Ovary (tissue), 10 donors: ENCODE measurements at regions of chr14 and their contacts with region 1.

Region 1: GRCh38 chr14:99729991-99730868 is 46.1 kb downstream of the CYP46A1 start:
- DNase-seq: peak; percentile 49 to 82 (median 77)
- H3K4me3 ChIP-seq: peak overlapping the region; percentile 49
- H3K27ac ChIP-seq: no peak overlapping the region
- H3K4me1 ChIP-seq: peaks cover 9% of the 10 kb centered on the region
- H3K27me3 ChIP-seq: no peaks in the 10 kb centered on the region
- CTCF ChIP-seq: peak; percentile 80 to 87 (median 82)
- EP300 ChIP-seq: no peak
- POLR2A ChIP-seq: no peak

Region 2: GRCh38 chr14:99793213-99794150 is 63.3 kb after region 1 on chr14 and contains the start of gene EML1:
- intact Hi-C with region 1: loop called in 1 of 4 experiments (anchors 5 kb)
- DNase-seq: peak; percentile 84 to 90 (median 87)
- H3K4me3 ChIP-seq: peak within 1 kb of the TSS; percentile 68
- H3K27ac ChIP-seq: peak within 1 kb of the TSS; percentile 80 to 89
- H3K4me1 ChIP-seq: peaks cover 4% of the 10 kb centered on the region
- H3K27me3 ChIP-seq: no peaks in the 10 kb centered on the region
- CTCF ChIP-seq: no peak
- EP300 ChIP-seq: no peak
- POLR2A ChIP-seq: no peak
- total RNA-seq, gene EML1: 4.4 to 22.3 (median 9.8) TPM

Region 3: DNA sequence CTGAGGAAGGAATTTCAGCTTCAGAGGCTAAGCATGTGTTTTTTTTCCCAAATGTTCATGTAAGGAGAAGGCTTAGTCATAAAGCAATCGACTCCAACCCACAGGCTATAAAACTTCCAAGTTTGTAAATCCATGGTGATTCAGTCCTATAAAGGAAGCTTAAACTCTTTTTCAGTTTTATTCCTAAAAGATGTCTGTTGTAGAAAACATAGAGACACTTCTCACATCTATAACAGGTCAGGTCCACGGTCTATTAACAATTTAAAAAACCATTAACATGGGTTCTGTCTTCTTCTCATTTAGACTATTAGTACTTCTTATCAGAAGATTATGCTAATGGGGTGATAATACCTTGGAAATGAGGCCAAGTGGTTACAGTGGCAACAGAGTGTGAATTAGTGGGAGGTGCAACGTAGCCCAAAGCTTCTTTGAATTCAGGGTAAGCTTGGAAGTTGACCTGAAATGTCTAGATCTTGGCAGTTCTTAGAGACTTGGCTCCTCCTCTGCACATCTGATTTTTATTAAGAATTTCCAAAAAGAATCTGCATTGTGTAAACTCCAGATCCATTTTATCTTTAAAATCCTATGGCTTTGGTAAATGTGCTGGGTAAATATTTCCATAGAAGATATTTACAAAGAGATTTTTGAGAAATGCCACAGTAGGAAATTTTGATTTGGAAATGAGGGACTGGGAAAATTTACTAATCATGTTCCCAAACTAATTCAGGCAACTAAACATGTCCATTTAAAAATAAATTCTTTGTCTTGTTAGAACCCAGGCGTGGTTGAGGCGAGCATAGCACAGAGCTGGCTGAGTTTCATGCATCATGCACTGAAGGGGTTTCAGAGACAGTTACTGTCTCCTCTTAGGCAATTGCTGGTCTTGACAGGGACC is 149.4 kb after region 1 on chr14:
- intact Hi-C with region 1: loop called in 3 of 4 experiments (anchors 2 to 5 kb)
- DNase-seq: no peak
- H3K4me3 ChIP-seq: no peak overlapping the region
- H3K27ac ChIP-seq: no peak overlapping the region
- H3K4me1 ChIP-seq: no peaks in the 10 kb centered on the region
- H3K27me3 ChIP-seq: no peaks in the 10 kb centered on the region
- CTCF ChIP-seq: no peak
- EP300 ChIP-seq: no peak
- POLR2A ChIP-seq: no peak